Activated CD4-positive, alpha-beta T cell treated with anti-CD3 and anti-CD28 coated beads, Interleukin-2, amount 10 ng/mL, durations not matched to agents 24 days and 14 days (primary cell): ENCODE measurements at regions of chr16 and their contacts with region 1.

Region 1: DNA sequence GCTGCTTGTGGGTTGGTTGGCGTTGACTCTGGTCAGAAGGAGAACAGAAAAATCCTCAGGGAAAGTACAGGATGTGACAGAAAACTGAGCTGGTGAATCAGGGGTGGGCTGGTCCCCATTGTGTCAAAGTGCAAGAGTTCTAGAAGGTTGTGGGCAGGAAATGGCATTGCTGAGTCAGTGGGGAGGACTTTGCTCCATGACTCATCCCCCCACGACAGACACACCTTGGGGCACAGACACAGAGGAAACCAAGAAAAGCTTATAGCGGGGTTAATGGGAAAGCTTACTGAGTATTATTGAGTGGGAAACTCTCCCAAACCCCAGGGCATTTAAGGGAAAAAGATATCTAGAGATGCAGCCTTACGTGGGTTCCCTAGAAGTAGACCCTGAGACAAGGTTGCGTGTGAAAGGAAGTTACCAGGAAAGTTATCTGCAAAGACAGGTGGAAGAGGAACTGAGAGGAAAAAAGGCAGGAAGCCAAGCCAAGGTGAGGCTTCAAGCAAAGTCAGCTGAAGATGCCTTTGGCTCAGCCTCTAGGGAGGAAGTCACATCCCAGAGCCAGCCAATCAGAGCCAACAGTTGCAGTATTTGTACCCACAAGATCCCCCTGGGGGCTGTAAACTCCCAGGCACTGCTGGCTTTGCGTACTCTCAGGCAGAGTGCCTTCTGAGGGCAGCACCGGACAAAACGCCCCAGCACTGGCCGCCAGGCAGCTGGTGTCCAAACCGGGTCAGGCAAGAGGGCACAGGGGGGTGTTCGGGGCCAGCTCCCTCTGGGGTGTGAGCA is 86.4 kb downstream of the FOXL1 start:
- DNase-seq: peak; percentile 85
- H3K4me3 Mint-ChIP-seq: peak overlapping the region; percentile 73
- H3K27ac Mint-ChIP-seq: peak overlapping the region; percentile 96
- H3K4me1 Mint-ChIP-seq: peaks cover 29% of the 10 kb centered on the region
- H3K27me3 Mint-ChIP-seq: no peaks in the 10 kb centered on the region

Region 2: GRCh38 chr16:85995541-85996423 is 668.9 kb before region 1 on chr16:
- intact Hi-C with region 1: loop called (anchors 10 kb)
- DNase-seq: no peak
- H3K4me3 Mint-ChIP-seq: peak overlapping the region; percentile 47
- H3K27ac Mint-ChIP-seq: peak overlapping the region; percentile 83
- H3K4me1 Mint-ChIP-seq: peaks cover 35% of the 10 kb centered on the region
- H3K27me3 Mint-ChIP-seq: no peaks in the 10 kb centered on the region

Region 3: GRCh38 chr16:86575754-86576557 is 88.8 kb before region 1 on chr16:
- intact Hi-C with region 1: loop called (anchors 5 kb)
- DNase-seq: peak; percentile 87
- H3K4me3 Mint-ChIP-seq: peak overlapping the region; percentile 70
- H3K27ac Mint-ChIP-seq: no peak overlapping the region
- H3K4me1 Mint-ChIP-seq: peaks cover 7% of the 10 kb centered on the region
- H3K27me3 Mint-ChIP-seq: peaks cover 68% of the 10 kb centered on the region

Region 4: DNA sequence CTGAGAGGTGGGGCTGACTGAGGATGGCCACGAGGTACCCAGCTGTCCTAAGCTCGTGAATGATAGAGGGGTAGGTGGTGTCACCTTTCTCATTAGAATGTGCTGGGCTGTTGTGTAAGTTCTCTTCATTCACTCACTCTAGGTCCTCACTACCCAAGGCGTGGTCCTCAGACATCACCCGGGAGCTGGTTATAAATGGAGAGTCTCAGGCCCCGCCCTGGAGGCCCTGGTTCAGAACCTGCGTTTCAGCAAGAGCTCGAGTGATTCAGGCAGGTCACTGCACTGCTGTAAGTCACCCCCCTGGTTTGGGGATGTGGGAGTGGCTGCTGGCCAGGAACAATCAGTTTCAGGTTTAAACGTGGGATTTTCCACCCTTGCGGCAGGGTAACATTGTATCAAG is 53.4 kb after region 1 on chr16:
- intact Hi-C with region 1: loop called (anchors 2 kb)
- DNase-seq: peak; percentile 57
- H3K4me3 Mint-ChIP-seq: no peak overlapping the region
- H3K27ac Mint-ChIP-seq: no peak overlapping the region
- H3K4me1 Mint-ChIP-seq: peaks cover 10% of the 10 kb centered on the region
- H3K27me3 Mint-ChIP-seq: no peaks in the 10 kb centered on the region

Region 5: DNA sequence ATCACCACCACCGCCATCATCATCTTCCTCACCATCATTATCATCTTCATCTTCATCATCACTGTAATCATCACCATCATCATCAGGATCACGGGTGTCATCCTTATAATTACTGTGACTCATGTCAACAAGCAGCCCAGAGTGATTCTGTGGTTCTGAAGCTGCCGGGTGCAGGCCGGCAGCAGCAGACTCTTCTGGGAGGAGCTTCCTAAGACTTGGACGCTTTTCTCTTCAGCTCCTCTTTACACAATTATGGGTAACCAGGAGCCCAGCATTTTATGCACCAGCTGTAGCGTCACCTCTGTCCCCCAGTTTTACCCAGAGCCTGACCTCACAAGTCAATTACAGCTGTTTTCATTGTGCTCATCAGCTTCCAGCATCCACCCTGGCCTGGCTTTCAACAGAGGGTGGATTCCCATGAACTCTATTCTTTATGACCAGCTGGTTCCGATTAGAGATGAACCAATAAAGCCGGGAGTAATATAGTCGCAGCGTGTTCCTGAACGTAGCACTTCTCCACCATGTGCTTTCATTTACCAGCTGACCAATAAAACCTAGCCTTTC is 189.4 kb after region 1 on chr16:
- intact Hi-C with region 1: no loop called
- DNase-seq: no peak
- H3K4me3 Mint-ChIP-seq: no peak overlapping the region
- H3K27ac Mint-ChIP-seq: no peak overlapping the region
- H3K4me1 Mint-ChIP-seq: no peaks in the 10 kb centered on the region
- H3K27me3 Mint-ChIP-seq: no peaks in the 10 kb centered on the region